ENCODE measurements at regions of chr3 and their contacts with region 1.

Region 1: GRCh38 chr3:112746675-112747280 is 99.9 kb downstream of the CD200R1L start:
- DNase-seq: no peak
- CTCF ChIP-seq: no peak

Region 2: DNA sequence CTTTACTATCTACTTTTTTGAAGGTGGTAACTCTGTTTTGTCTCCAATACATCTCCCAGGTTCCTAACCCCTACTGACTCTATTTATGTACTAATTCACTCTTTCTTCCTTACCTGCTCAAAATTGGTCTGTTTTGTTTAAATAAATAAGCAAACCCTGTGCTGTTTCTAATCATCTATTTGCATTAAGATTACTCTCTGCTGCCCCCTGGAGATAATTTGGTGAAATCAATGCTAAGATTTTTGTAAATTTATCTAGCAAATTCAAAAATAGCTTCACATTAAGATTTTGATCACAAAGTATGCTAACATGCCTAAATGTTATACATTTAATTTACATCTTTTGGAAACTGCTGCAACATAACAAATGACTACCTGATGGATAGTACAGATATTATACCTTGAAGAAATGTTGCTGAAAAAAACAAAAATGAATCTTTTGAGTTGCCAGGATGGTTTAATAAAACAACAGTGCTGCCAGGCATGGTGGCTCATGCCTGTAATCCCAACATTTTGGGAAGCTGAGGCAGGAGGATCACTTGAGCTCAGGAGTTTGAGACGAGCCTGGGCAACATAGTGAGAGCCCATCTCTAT is 232.6 kb after region 1 on chr3:
- in situ Hi-C with region 1: loop called (anchors 10 kb)
- DNase-seq: no peak
- CTCF ChIP-seq: peak; percentile 10

Region 3: GRCh38 chr3:113084777-113085176 is 338.0 kb after region 1 on chr3:
- in situ Hi-C with region 1: no loop called
- DNase-seq: no peak
- CTCF ChIP-seq: no peak

Measured in GM13976 (cell line).